ENCODE measurements at regions of chr19 and their contacts with region 1.

Region 1: DNA sequence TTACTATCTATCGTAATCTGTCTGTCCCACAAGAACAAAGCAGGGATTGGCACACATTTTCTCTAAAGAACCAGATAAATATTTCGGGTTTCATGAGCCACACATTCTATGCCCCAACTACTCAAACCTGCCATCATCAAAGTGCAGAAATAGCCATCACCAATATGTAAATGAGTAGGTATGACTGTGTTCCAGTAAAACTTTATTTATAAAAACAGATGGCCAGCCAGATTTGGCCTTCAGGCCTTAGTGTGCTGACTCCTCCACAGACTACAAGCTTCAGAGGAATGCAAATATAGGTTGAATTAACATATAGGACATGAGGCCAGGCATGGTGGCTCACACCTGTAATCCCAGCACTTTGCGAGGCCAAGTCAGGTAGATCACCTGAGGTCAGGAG is 8.9 kb upstream of the DNMT1 start:
- DNase-seq: no peak
- ATAC-seq: no peak
- H3K4me3 ChIP-seq: no peak overlapping the region
- H3K27ac ChIP-seq: no peak overlapping the region
- H3K4me1 ChIP-seq: peaks cover 7% of the 10 kb centered on the region
- H3K27me3 ChIP-seq: no peaks in the 10 kb centered on the region
- CTCF ChIP-seq: no peak
- POLR2A ChIP-seq: no peak
- RAD21 ChIP-seq: no peak

Region 2: DNA sequence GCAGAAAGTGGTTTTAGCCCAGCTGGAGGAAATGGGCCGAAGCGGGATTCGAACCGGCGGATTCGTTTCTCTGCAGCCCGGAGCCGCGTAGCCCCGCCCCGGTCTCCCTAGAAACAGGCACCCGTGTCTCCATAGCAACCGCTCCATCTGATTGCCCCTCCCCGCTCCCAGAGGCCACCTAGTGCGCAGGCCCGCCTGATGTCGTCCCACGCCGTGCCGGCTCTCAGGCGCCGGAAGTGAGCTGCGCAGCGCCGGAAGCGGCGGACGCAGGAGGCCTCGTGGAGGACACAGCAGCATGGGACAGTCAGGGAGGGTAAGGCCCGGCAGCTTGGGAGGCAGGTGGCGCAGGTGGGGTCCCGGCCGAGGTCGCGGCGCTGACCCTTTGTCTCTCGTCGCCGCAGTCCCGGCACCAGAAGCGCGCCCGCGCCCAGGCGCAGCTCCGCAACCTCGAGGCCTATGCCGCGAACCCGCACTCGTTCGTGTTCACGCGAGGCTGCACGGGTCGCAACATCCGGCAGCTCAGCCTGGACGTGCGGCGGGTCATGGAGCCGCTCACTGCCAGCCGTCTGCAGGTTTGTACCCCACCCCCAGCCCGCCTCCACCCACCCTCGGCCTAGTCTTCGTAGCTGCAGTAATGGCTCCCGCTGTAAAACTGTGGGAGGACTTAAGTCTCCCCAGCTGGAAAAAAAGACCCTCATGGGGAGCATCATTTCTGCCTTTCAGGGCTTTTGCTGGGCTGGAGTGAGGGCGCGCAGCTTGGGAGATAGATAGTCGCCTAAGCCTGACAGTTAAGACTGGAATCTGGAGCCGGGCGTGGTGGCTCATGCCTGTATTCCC is 97.4 kb before region 1 on chr19 and contains the start of gene PPAN:
- CTCF ChIA-PET with region 1: no interaction called
- POLR2A ChIA-PET with region 1: interaction called, 15 read pairs
- dilution Hi-C with region 1: no loop called
- in situ Hi-C with region 1: no loop called
- intact Hi-C with region 1: no loop called
- DNase-seq: peak; percentile 98
- ATAC-seq: peak; percentile 93
- H3K4me3 ChIP-seq: peak within 1 kb of the TSS; percentile 76
- H3K27ac ChIP-seq: peak within 1 kb of the TSS; percentile 82
- H3K4me1 ChIP-seq: peaks cover 4% of the 10 kb centered on the region
- H3K27me3 ChIP-seq: no peaks in the 10 kb centered on the region
- CTCF ChIP-seq: no peak
- POLR2A ChIP-seq: peak; percentile 86
- RAD21 ChIP-seq: no peak
- total RNA-seq, gene PPAN: 24.0 and 30.3 TPM in 2 replicates

Region 3: DNA sequence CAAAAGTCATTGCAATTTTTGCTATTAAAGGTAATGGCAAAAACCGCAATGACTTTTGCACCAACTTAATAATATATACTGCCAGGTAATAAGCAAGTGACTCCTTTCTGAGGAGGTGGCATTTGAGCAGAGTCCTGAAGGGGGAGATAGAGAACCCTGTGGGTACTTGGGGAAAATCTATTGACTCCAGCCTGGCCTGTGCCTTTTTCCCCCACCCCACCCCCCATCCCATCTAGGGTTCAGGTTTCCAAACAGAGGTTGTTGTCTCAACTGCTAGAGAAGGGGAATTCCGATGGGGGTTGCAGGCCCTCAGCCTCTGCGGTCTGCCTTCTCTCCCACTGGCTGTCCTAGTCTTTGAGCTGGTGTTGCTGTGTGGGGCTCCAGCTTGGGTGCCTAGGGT is 16.0 kb after region 1 on chr19:
- CTCF ChIA-PET with region 1: no interaction called
- POLR2A ChIA-PET with region 1: no interaction called
- dilution Hi-C with region 1: no loop called
- in situ Hi-C with region 1: no loop called
- intact Hi-C with region 1: no loop called
- DNase-seq: peak; percentile 89
- ATAC-seq: peak; percentile 91
- H3K4me3 ChIP-seq: no peak overlapping the region
- H3K27ac ChIP-seq: peak overlapping the region; percentile 7; the same call in 1 of the 2 replicates
- H3K4me1 ChIP-seq: peaks cover 5% of the 10 kb centered on the region
- H3K27me3 ChIP-seq: no peaks in the 10 kb centered on the region
- CTCF ChIP-seq: peak; percentile 61
- POLR2A ChIP-seq: no peak
- RAD21 ChIP-seq: peak; percentile 57